ENCODE measurements at regions of chr21 and their contacts with region 1.

Region 1: DNA sequence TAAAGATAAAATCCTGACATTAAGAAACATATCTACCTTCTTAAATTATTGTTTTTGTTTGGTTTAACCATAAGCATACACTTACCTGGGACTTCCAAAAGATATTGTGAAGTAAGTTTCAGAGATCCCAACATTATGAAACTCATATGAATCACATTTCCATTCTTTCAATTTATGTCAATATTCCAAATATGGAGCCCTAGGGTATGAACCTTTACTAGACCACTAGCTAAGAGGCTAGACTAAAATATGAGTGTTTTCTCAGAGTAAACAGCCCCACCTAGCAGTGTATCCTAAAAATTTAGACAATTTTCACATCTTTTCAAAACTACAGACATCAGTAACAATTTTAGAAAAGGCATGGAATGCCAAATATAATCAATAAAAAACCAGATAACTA is 24.4 kb downstream of the SCAF4 start:
- DNase-seq: no peak
- ATAC-seq: no peak
- H3K4me3 ChIP-seq: no peak overlapping the region
- H3K4me3 Mint-ChIP-seq: no peak overlapping the region
- H3K27ac ChIP-seq: no peak overlapping the region
- H3K27ac Mint-ChIP-seq: peak overlapping the region in 1 of 9 donors; percentile 17
- H3K4me1 ChIP-seq: peaks cover 8 to 13% of the 10 kb centered on the region in 2 donors
- H3K4me1 Mint-ChIP-seq: peaks cover 36 to 73% (median 62%) of the 10 kb centered on the region in 7 donors
- H3K27me3 ChIP-seq: no peaks in the 10 kb centered on the region
- H3K27me3 Mint-ChIP-seq: no peaks in the 10 kb centered on the region

Region 2: DNA sequence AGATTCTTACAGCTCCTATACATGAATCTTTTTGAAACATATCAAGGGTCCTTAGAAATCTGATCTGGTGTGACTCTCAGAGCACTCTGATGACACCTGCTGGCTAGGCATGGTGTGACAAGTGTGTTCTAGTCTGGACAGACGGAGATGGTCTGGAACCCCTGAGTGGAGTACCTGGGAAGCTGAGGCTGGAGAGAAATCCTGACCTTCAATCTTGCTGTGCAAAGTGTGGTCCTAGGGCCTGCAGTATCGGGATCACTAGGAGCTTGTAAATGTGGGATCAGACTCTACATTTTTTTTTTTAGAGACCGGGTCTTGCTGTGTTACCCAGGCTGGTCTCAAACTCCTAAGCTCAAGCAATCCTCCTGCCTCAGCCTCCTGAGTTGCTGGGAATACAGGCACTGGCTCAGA is 126.6 kb before region 1 on chr21:
- CTCF ChIA-PET with region 1: no interaction called
- POLR2A ChIA-PET with region 1: no interaction called
- intact Hi-C with region 1: no loop called
- DNase-seq: peak; percentile 50 to 77 (median 66)
- ATAC-seq: peak; percentile 90
- H3K4me3 ChIP-seq: no peak overlapping the region
- H3K4me3 Mint-ChIP-seq: no peak overlapping the region
- H3K27ac ChIP-seq: no peak overlapping the region
- H3K27ac Mint-ChIP-seq: peak overlapping the region in 3 of 9 donors; percentile 10 to 76 (median 32)
- H3K4me1 ChIP-seq: no peaks in the 10 kb centered on the region
- H3K4me1 Mint-ChIP-seq: peaks cover 0 to 8% (median 4%) of the 10 kb centered on the region in 7 donors
- H3K27me3 ChIP-seq: no peaks in the 10 kb centered on the region
- H3K27me3 Mint-ChIP-seq: peaks cover 0 to 25% (median 0%) of the 10 kb centered on the region in 5 donors

Region 3: DNA sequence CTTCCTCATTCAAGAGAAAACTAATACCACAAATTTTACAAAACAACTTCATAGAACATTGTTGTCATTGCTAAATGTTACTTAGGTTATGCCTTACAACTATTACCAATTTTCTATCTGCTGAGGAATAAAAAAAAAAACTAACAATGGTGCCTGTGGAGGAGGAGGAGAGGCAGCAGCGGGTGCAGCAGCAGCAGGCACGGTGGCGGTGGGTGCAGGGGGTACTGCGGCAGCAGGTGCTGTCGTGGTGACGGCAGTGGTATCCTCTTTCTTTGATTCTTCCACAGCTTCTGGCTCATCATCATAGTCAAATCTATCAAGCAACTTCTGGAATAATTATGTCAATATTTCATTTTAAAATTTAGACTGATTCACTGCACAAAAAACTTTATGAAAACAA is 11.1 kb before region 1 on chr21:
- CTCF ChIA-PET with region 1: no interaction called
- POLR2A ChIA-PET with region 1: no interaction called
- intact Hi-C with region 1: loop called in 1 of 2 experiments (anchors 2 kb)
- DNase-seq: no peak
- ATAC-seq: no peak
- H3K4me3 ChIP-seq: no peak overlapping the region
- H3K4me3 Mint-ChIP-seq: no peak overlapping the region
- H3K27ac ChIP-seq: no peak overlapping the region
- H3K27ac Mint-ChIP-seq: peak overlapping the region in 8 of 9 donors; percentile 5 to 69 (median 44)
- H3K4me1 ChIP-seq: no peaks in the 10 kb centered on the region
- H3K4me1 Mint-ChIP-seq: peaks cover 2 to 13% (median 5%) of the 10 kb centered on the region in 7 donors
- H3K27me3 ChIP-seq: no peaks in the 10 kb centered on the region
- H3K27me3 Mint-ChIP-seq: no peaks in the 10 kb centered on the region